ENCODE measurements at regions of chr11 and their contacts with region 1.

Region 1: DNA sequence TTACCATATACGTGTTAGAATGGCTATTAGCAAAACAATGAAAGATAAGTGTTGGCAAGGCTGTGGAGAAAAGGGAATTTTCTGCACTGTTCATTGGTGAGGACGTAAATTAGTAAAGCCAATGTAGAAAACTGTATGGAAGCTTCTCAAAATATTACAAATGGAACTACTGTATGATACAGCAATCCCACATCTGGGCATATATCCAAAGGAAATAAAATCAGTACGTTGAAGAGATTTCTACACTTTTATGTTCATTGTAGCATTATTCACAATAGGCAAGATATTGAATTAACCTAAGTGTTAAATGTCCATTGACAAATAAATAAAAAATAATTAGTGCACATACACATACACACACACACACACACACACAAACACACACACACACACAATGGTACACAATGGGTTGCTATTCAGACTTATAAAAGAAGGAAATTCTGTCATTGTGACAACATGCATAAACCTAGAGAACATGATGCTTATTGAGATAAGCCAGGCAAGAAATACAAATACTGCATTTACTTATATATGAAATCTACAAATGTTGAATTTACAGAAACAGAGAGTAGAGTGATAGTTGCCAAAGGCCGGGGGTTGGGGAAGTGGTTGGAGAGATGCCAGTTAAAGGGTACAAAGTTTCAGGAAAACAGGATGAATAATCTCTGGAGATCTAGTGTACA is 565.8 kb upstream of the LRRC4C start:
- DNase-seq: no peak
- H3K4me3 ChIP-seq: no peak overlapping the region
- H3K27ac ChIP-seq: no peak overlapping the region
- H3K4me1 ChIP-seq: no peaks in the 10 kb centered on the region
- H3K27me3 ChIP-seq: no peaks in the 10 kb centered on the region
- CTCF ChIP-seq: no peak
- EP300 ChIP-seq: no peak
- POLR2A ChIP-seq: no peak

Region 2: DNA sequence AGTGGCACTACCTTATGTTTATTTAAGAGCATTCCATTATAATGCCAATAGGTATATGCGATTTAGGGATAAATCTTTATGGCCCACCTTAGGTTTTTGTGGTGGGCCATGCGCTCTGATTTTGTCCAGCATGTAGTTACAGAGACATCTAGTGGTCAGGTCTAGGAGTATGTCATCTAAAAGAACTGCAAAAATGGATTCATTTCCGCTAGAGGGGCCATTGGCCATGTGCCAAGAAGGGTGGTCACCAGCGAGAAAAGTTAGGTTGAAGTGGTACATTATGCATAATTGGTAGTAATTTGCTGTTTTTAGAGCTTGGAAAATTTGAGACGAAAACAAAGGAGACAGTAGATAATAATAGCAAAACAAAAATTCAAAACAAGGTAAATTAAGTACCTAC is 593.5 kb before region 1 on chr11:
- in situ Hi-C with region 1: no loop called
- intact Hi-C with region 1: no loop called
- DNase-seq: no peak
- H3K4me3 ChIP-seq: no peak overlapping the region
- H3K27ac ChIP-seq: no peak overlapping the region
- H3K4me1 ChIP-seq: peaks cover 0 to 3% (median under 1%) of the 10 kb centered on the region in 4 donors
- H3K27me3 ChIP-seq: no peaks in the 10 kb centered on the region
- CTCF ChIP-seq: peak in 2 of 5 experiments; percentile 8 to 21
- EP300 ChIP-seq: no peak
- POLR2A ChIP-seq: no peak

Region 3: DNA sequence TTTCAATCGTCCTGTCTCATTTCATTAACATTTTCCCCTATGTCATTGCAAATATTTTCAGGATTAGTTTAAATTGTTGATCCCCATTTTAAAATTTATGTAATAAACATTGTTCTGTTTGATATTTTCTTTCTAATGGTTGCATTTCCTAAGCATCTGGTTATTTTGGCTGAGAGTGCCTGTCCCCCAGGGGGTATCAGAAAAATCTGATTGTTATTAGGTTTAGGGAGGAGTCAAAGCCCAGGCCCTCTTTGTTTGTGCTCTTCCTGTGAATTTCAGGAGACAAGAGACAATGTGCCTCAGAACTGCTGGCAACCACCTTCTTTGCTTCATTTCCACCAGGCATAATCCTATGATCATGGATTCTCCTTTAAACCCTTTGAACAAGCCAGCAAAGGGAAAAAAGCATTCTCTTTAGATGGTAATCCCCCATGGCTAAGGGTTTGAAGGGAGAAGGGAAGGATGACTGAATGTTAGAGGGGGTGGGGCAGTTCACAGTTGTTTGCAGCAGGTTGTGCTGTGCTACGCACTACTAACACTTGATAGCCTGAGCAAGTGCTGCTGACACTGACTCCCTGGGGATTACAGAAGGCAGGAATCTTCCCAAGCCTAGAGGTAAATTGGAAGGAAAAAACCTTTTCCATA is 103.4 kb before region 1 on chr11:
- in situ Hi-C with region 1: no loop called
- intact Hi-C with region 1: no loop called
- DNase-seq: no peak
- H3K4me3 ChIP-seq: no peak overlapping the region
- H3K27ac ChIP-seq: no peak overlapping the region
- H3K4me1 ChIP-seq: no peaks in the 10 kb centered on the region
- H3K27me3 ChIP-seq: no peaks in the 10 kb centered on the region
- CTCF ChIP-seq: no peak
- EP300 ChIP-seq: no peak
- POLR2A ChIP-seq: no peak

Region 4: GRCh38 chr11:43250309-43250708 is 1225.0 kb after region 1 on chr11:
- in situ Hi-C with region 1: no loop called
- intact Hi-C with region 1: loop called (anchors 10 kb)
- DNase-seq: no peak
- H3K4me3 ChIP-seq: no peak overlapping the region
- H3K27ac ChIP-seq: no peak overlapping the region
- H3K4me1 ChIP-seq: no peaks in the 10 kb centered on the region
- H3K27me3 ChIP-seq: no peaks in the 10 kb centered on the region
- CTCF ChIP-seq: no peak
- EP300 ChIP-seq: no peak
- POLR2A ChIP-seq: no peak